ENCODE measurements at regions of chr9 and their contacts with region 1.

Region 1: GRCh38 chr9:76153902-76154629 is 240.2 kb downstream of the RFK start:
- DNase-seq: no peak
- ATAC-seq: no peak
- H3K4me3 ChIP-seq: no peak overlapping the region
- H3K27ac ChIP-seq: no peak overlapping the region
- H3K4me1 ChIP-seq: peaks cover 0 to 3% (median 0%) of the 10 kb centered on the region in 12 donors
- H3K27me3 ChIP-seq: no peaks in the 10 kb centered on the region
- CTCF ChIP-seq: no peak
- POLR2A ChIP-seq: no peak

Region 2: GRCh38 chr9:76092572-76092971 is 61.5 kb before region 1 on chr9:
- intact Hi-C with region 1: loop called in 1 of 10 experiments (anchors 10 kb)
- DNase-seq: no peak
- ATAC-seq: no peak
- H3K4me3 ChIP-seq: no peak overlapping the region
- H3K27ac ChIP-seq: no peak overlapping the region
- H3K4me1 ChIP-seq: no peaks in the 10 kb centered on the region
- H3K27me3 ChIP-seq: no peaks in the 10 kb centered on the region
- CTCF ChIP-seq: no peak
- POLR2A ChIP-seq: no peak

Region 3: DNA sequence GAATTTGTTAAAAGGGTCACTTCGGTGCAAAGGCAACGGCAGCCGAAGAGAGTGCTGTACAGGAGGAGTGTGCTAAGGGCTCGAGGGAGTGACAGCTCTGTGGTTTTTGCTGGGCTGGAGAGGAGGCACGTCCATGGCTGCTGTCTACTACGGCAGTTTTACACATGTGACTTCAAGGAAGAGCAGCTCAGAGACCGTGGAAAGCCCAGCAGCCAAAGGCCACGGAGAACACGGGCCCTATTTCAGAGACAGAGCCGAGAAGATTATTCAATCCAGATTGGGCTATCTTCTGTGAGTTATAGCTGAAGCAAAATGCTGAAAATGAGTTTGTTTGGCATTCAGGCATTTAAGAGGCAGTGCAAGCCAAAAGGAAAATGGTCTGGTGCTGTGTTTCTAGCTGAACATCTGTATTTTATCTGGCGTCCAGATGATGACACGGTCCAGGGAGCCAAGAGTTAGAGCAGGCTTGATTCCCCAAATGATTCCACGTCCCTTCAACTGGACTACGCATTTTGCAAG is 143.7 kb after region 1 on chr9:
- intact Hi-C with region 1: no loop called
- DNase-seq: peak in 4 of 5 donors; percentile 25 to 50 (median 34)
- ATAC-seq: peak; percentile 67 to 85 (median 80)
- H3K4me3 ChIP-seq: peak overlapping the region in 7 of 12 donors; percentile 3 to 31 (median 10)
- H3K27ac ChIP-seq: peak overlapping the region in 10 of 12 donors; percentile 24 to 61 (median 47)
- H3K4me1 ChIP-seq: peaks cover 0 to 14% (median 0%) of the 10 kb centered on the region in 12 donors
- H3K27me3 ChIP-seq: no peaks in the 10 kb centered on the region
- CTCF ChIP-seq: no peak
- POLR2A ChIP-seq: no peak

Measured in heart left ventricle (tissue), 16 donors.